Activated CD4-positive, alpha-beta T cell treated with anti-CD3 and anti-CD28 coated beads, Interleukin-2, amount 10 ng/mL, durations not matched to agents 24 days and 14 days (primary cell): ENCODE measurements at regions of chr17 and their contacts with region 1.

Region 1: DNA sequence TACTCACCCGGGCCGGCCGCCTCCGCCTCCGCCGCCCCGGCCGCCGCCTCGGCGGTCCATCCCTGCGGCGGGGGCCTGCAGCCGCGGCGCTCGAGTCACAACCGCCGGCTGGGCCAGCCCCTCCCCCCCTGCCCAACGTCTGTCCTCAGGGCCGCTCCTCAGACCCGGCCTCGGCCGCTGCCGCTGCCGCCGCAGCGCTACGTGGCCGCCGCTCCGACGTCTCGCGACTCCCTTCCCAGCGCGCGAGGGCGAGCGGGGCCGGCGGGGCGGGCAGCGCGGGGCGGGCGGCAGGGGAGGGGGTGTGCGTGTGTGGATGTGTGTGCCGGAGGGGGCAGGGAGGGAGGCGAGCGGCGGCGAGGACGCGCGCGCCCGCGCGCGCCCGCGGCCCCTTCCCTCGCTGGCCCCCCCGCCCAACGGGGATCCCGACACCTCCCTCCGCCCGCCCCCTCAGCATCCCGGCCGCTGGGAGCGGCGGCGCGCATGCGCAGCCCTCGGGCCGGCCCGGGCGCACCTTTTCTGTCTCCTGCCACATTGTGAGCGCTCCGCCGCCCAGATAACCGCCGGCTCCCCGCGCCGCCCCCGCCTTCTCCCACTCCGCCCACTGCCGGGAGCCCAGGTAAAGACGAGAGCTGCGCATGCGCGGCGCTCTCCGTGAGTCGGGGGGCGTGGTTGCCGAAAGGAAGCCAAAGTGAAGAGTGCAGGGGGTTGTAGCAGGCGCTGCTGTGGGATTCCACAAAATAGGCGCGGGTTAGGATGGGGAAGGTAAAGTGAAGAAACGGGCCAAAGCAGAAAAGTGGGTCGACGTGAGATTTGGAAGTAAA is at the start of gene ZNF652:
- DNase-seq: peak; percentile 98
- H3K4me3 Mint-ChIP-seq: peak within 1 kb of the TSS; percentile 93
- H3K27ac Mint-ChIP-seq: peak within 1 kb of the TSS; percentile 93
- H3K4me1 Mint-ChIP-seq: peaks cover 56% of the 10 kb centered on the region
- H3K27me3 Mint-ChIP-seq: no peaks in the 10 kb centered on the region
- total RNA-seq, gene ZNF652: 4.5 and 5.5 TPM in 2 replicates

Region 2: GRCh38 chr17:48985436-48986245 is 376.5 kb before region 1 on chr17:
- intact Hi-C with region 1: no loop called
- DNase-seq: no peak
- H3K4me3 Mint-ChIP-seq: no peak overlapping the region
- H3K27ac Mint-ChIP-seq: no peak overlapping the region
- H3K4me1 Mint-ChIP-seq: no peaks in the 10 kb centered on the region
- H3K27me3 Mint-ChIP-seq: peaks cover 29% of the 10 kb centered on the region

Region 3: GRCh38 chr17:49108318-49108717 is 253.8 kb before region 1 on chr17:
- intact Hi-C with region 1: no loop called
- DNase-seq: no peak
- H3K4me3 Mint-ChIP-seq: no peak overlapping the region
- H3K27ac Mint-ChIP-seq: no peak overlapping the region
- H3K4me1 Mint-ChIP-seq: no peaks in the 10 kb centered on the region
- H3K27me3 Mint-ChIP-seq: peaks cover 20% of the 10 kb centered on the region

Region 4: DNA sequence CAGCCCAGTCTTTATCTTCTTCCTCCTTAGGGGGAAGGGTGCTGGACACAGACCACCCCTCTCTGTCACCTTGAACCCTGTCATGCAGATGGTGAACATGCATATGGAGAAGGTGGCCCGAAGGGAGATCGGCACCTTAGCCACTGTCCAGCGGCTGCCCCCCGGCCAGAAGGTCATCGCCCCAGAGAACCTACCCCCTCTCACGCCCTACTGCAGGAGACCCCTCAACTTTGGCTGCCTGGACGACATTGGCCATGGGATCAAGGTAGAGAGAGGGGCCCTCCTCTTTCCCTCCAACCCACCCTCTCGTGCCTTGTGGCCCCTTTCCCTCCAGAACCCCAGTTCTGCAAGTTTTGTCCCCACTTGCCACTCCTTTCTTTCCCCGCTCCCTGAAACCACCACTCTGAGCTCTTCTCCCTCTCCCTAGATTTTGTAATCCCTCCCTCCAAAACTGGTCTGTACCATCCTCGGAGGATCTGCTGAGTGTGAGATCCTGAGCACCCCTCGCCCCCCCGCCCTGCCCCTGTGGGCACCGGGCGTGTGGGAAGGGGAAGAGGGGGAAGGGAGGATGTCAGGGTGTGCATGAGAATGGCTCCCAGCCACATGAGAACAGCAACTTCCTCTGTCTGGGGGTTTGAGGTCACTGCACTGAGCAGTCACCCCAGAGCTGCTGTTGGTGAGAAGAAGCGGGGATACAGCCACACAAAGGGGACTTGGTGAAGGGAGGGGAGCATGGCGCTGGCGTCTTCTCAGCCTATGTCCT is 144.3 kb before region 1 on chr17:
- intact Hi-C with region 1: loop called (anchors 5 kb)
- DNase-seq: peak; percentile 91
- H3K4me3 Mint-ChIP-seq: peak overlapping the region; percentile 80
- H3K27ac Mint-ChIP-seq: peak overlapping the region; percentile 87
- H3K4me1 Mint-ChIP-seq: peaks cover 55% of the 10 kb centered on the region
- H3K27me3 Mint-ChIP-seq: no peaks in the 10 kb centered on the region

Region 5: GRCh38 chr17:49414622-49415350 is 52.7 kb after region 1 on chr17 and contains the start of gene PHB1:
- intact Hi-C with region 1: loop called (anchors 1 kb)
- DNase-seq: peak; percentile 98
- H3K4me3 Mint-ChIP-seq: peak within 1 kb of the TSS; percentile 91
- H3K27ac Mint-ChIP-seq: peak within 1 kb of the TSS; percentile 83
- H3K4me1 Mint-ChIP-seq: peaks cover 5% of the 10 kb centered on the region
- H3K27me3 Mint-ChIP-seq: peaks cover 4% of the 10 kb centered on the region
- total RNA-seq, gene PHB1: 440 and 448 TPM in 2 replicates